CD4-positive, alpha-beta T cell (primary cell): ENCODE measurements at regions of chr1 and their contacts with region 1.

Region 1: GRCh38 chr1:26181586-26182382 is 4.5 kb downstream of the CNKSR1 start:
- DNase-seq: no peak
- ATAC-seq: no peak
- H3K4me3 ChIP-seq: no peak overlapping the region
- H3K4me3 Mint-ChIP-seq: no peak overlapping the region
- H3K27ac ChIP-seq: no peak overlapping the region
- H3K27ac Mint-ChIP-seq: no peak overlapping the region
- H3K4me1 ChIP-seq: no peaks in the 10 kb centered on the region
- H3K4me1 Mint-ChIP-seq: no peaks in the 10 kb centered on the region
- H3K27me3 ChIP-seq: no peaks in the 10 kb centered on the region
- H3K27me3 Mint-ChIP-seq: no peaks in the 10 kb centered on the region
- CTCF ChIP-seq: no peak

Region 2: DNA sequence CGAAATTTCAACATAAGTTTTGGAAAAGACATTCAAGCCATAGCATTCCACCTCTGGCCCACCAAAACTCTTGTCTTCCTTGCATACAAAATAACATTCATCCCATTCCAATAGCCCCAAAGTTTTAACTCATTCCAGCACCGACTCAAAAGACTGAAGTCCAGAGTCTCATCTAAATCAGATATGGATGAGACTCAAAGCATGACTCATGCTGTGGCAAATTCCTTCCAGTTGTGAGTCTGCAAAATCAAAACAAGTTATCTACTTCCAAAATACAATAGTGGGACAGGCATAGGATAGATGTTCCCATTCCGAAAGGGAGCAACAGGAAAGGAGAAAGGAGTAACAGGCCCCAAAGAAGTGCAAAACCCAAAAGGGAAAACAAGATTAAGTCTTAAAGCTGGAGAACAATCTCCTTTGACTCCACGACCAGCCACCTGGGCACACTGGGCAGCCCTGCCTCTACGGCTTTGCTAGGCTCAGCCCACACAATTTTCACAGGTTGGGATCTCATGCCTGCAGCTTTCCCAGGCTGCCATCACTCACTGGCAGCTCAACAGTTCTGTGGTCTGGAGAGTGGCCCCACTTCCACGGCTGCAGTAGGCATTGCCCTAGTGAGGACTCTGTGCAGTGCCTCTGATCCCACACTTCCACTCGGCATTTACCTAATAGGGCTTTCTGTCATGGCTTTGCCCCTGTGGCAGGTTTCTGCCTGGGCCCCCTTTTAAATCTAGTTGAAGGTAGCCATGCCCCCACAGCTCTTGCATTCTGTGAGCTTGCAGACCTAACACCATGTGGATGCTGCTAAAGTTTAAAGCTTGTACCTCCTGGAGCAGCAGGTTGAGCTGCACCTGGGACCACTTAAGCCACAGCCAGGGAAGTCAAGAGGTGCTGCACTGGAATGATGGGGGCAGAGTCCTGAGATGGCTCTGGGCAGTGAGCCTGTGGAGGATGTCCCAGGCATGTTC is 1302.7 kb before region 1 on chr1:
- CTCF ChIA-PET with region 1: no interaction called
- POLR2A ChIA-PET with region 1: no interaction called
- intact Hi-C with region 1: no loop called
- DNase-seq: peak in 1 of 14 experiments; percentile 8
- ATAC-seq: no peak
- H3K4me3 ChIP-seq: no peak overlapping the region
- H3K4me3 Mint-ChIP-seq: no peak overlapping the region
- H3K27ac ChIP-seq: no peak overlapping the region
- H3K27ac Mint-ChIP-seq: no peak overlapping the region
- H3K4me1 ChIP-seq: no peaks in the 10 kb centered on the region
- H3K4me1 Mint-ChIP-seq: no peaks in the 10 kb centered on the region
- H3K27me3 ChIP-seq: no peaks in the 10 kb centered on the region
- H3K27me3 Mint-ChIP-seq: no peaks in the 10 kb centered on the region
- CTCF ChIP-seq: no peak

Region 3: DNA sequence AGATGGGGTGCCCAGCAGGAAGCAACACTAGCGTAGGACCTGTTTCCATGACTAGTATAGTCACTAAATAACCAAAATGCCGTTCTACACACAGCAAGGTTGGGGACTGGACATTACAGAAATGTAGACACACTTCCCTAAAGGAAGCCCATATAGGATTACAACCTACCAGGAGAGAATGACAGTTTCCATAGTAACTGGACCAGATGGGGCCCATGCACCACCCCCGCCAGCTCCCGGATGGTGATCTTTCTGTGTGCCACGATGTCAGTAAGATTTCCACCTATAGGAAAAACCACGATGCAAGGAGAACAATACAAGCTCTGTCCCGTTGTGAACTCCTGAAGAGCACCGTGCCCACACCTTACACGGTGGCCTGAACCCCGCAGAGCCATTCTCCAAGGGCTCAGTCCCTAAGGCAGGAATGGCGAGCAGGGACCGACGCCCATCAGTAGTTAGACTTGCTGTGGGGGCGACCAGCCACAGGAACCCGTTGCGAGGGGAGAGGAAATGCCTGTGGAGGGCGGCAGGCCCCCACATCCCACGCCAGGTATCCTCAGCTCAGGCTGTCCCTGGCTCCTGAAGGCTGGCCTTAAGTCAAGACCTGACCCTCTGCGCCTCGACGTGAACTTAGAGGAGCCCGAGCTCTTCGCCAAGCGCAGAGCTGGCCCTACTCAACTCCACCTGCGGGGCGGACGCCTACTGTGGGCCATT is 38.6 kb after region 1 on chr1:
- CTCF ChIA-PET with region 1: no interaction called
- POLR2A ChIA-PET with region 1: no interaction called
- intact Hi-C with region 1: loop called in 1 of 2 experiments (anchors 5 kb)
- DNase-seq: no peak
- ATAC-seq: no peak
- H3K4me3 ChIP-seq: no peak overlapping the region
- H3K4me3 Mint-ChIP-seq: no peak overlapping the region
- H3K27ac ChIP-seq: no peak overlapping the region
- H3K27ac Mint-ChIP-seq: no peak overlapping the region
- H3K4me1 ChIP-seq: peaks cover 5% of the 10 kb centered on the region
- H3K4me1 Mint-ChIP-seq: peaks cover under 1% of the 10 kb centered on the region
- H3K27me3 ChIP-seq: peaks cover 3 to 8% of the 10 kb centered on the region in 2 experiments
- H3K27me3 Mint-ChIP-seq: peaks cover 18% of the 10 kb centered on the region
- CTCF ChIP-seq: no peak